Naive thymus-derived CD8-positive, alpha-beta T cell (primary cell): ENCODE measurements at regions of chr5 and their contacts with region 1.

Region 1: DNA sequence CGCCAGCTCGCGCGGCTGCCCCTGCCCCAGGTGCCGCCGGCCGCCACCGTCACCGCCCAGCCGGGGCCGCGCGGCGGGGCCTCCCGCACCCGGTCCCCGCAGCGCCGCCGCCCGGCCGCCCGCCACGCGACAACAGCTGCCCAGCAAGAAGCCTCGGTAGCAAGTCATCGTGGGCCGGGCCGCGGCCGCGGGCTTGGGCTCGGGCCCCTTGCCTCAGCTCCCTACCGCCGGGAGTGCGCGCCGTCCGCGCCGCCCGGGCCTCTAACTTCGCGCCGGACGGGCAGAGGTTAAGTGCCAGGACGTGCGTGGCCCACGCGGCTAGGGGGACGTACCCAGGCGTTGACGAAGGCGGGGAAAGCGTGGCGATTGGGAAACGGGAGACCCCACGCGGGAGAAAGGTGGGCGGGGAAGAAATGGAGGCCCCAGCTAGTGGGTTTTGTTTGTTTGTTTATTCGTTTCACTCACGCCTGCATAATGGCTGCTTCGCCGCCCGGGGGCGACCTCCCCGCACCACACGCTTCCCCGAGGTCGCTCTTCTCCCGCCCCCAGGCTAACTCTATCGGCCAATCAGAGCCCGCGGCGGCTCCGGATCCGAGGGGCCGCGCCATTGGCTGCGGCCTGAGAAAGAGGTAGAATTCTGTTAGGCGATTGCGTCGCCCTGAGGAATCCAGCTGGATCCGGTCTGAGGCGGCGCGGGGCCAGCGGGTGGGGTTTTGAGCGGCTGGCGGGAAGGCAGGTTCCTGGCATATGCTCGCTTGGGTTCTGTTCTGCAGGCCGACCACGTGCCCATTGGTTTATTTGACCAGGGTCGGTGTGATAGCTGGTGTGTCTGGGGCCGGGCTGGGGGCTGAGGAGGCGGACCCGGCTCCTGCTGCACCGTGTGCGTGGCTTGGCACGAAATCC is at the start of gene NADK2:
- DNase-seq: peak; percentile 89 to 97 (median 94)
- ATAC-seq: peak; percentile 84 to 87
- H3K4me3 Mint-ChIP-seq: peak within 1 kb of the TSS; percentile 85 to 95 (median 93)
- H3K27ac Mint-ChIP-seq: peak within 1 kb of the TSS; percentile 90 to 97 (median 96)
- H3K4me1 Mint-ChIP-seq: peaks cover 24 to 55% (median 46%) of the 10 kb centered on the region in 4 donors
- H3K27me3 Mint-ChIP-seq: no peaks in the 10 kb centered on the region
- polyA plus RNA-seq, gene NADK2: 4.7 to 9.8 (median 5.4) TPM

Region 2: GRCh38 chr5:34915139-34915855 is 1326.6 kb before region 1 on chr5 and contains the starts of genes BRIX1 and RAD1:
- POLR2A ChIA-PET with region 1: interaction called, 10 read pairs
- DNase-seq: peak; percentile 79 to 95 (median 91)
- ATAC-seq: peak; percentile 96 to 97
- H3K4me3 Mint-ChIP-seq: peak within 1 kb of the TSS in 7 of 10 donors; percentile 6 to 70 (median 61)
- H3K27ac Mint-ChIP-seq: peak within 1 kb of the TSS in 2 of 10 donors; percentile 46 to 85
- H3K4me1 Mint-ChIP-seq: peaks cover 13 to 34% (median 27%) of the 10 kb centered on the region in 4 donors
- H3K27me3 Mint-ChIP-seq: no peaks in the 10 kb centered on the region
- polyA plus RNA-seq, gene BRIX1: 43.4 to 49.9 (median 45.5) TPM
- polyA plus RNA-seq, gene RAD1: 18.8 to 19.9 (median 19.4) TPM

Region 3: GRCh38 chr5:34929150-34929719 is 1312.6 kb before region 1 on chr5 and contains the start of gene DNAJC21:
- POLR2A ChIA-PET with region 1: interaction called, 14 read pairs
- DNase-seq: peak; percentile 92 to 98 (median 97)
- ATAC-seq: peak; percentile 84 to 87
- H3K4me3 Mint-ChIP-seq: peak within 1 kb of the TSS; percentile 94 to 98 (median 97)
- H3K27ac Mint-ChIP-seq: peak within 1 kb of the TSS; percentile 76 to 98 (median 96)
- H3K4me1 Mint-ChIP-seq: peaks cover 21 to 40% (median 35%) of the 10 kb centered on the region in 4 donors
- H3K27me3 Mint-ChIP-seq: no peaks in the 10 kb centered on the region
- polyA plus RNA-seq, gene DNAJC21: 14.6 to 27.6 (median 21.8) TPM

Region 4: GRCh38 chr5:36151434-36152323 is 90.2 kb before region 1 on chr5 and contains the starts of genes LMBRD2 and SKP2:
- POLR2A ChIA-PET with region 1: interaction called, 41 read pairs
- DNase-seq: peak; percentile 90 to 98 (median 96)
- ATAC-seq: peak; percentile 96 to 97
- H3K4me3 Mint-ChIP-seq: peak within 1 kb of the TSS; percentile 92 to 98 (median 96)
- H3K27ac Mint-ChIP-seq: peak within 1 kb of the TSS; percentile 85 to 98 (median 94)
- H3K4me1 Mint-ChIP-seq: peaks cover 24 to 76% (median 67%) of the 10 kb centered on the region in 4 donors
- H3K27me3 Mint-ChIP-seq: no peaks in the 10 kb centered on the region
- polyA plus RNA-seq, gene LMBRD2: 1.4 to 4.5 (median 2.6) TPM
- polyA plus RNA-seq, gene SKP2: 15.3 to 21.2 (median 15.4) TPM

Region 5: DNA sequence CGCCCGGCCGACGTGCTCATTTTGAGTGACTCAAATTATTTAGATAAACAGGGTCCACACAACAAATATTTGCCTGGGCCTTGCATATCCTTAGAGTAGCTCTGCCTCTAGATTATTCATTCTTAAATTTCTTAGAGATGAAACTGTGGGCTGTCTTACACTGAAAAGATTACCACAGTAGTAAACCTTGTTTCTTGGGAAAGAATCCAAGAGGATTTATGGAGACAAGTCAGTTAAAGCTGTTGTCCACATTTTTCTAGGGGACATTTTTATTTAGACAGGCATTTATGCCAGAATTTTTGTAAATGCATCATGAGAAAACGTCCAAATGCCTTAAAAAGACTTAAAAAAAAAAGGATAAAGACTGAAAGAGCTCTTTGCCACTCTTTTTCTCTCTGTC is 92.4 kb after region 1 on chr5:
- POLR2A ChIA-PET with region 1: no interaction called
- DNase-seq: no peak
- ATAC-seq: no peak
- H3K4me3 Mint-ChIP-seq: no peak overlapping the region
- H3K27ac Mint-ChIP-seq: no peak overlapping the region
- H3K4me1 Mint-ChIP-seq: peaks cover 0 to 2% (median 0%) of the 10 kb centered on the region in 4 donors
- H3K27me3 Mint-ChIP-seq: peaks cover 0 to 9% (median 4%) of the 10 kb centered on the region in 5 donors

Region 6: DNA sequence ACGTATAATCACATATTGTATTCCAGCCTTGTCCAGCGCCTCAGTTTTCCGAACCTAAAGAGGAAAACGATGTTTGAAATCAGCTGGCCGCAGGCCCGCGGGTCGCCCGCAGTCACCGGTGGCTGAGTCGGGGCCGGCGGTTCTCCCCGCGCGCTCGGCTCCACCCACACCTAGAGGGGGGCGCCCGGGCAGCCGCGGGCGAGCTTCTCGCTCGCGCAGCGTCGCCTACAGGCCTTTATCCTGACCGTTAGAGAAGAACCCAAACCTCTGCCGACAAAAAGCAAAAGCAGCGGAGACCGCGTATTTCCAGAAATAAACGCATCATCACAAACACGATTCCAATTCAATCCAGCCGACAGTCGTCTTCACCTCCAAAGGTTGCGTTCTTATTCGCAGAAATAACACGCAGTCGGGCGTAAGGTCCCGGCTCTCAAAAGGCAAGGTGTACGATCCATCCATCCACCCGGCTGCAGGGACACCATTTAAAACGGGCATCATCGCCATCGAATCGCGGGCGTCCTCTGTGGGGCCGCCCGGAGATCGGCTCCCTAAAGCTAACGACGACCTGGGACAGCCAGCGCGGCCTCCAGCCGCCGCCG is 634.0 kb after region 1 on chr5:
- POLR2A ChIA-PET with region 1: interaction called, 21 read pairs
- DNase-seq: peak; percentile 66 to 86 (median 74)
- ATAC-seq: peak; percentile 60 to 65
- H3K4me3 Mint-ChIP-seq: peak overlapping the region; percentile 88 to 99 (median 93)
- H3K27ac Mint-ChIP-seq: peak overlapping the region; percentile 95 to 99 (median 98)
- H3K4me1 Mint-ChIP-seq: peaks cover 19 to 68% (median 42%) of the 10 kb centered on the region in 4 donors
- H3K27me3 Mint-ChIP-seq: no peaks in the 10 kb centered on the region